ENCODE measurements at regions of chr1 and their contacts with region 1.

Region 1: DNA sequence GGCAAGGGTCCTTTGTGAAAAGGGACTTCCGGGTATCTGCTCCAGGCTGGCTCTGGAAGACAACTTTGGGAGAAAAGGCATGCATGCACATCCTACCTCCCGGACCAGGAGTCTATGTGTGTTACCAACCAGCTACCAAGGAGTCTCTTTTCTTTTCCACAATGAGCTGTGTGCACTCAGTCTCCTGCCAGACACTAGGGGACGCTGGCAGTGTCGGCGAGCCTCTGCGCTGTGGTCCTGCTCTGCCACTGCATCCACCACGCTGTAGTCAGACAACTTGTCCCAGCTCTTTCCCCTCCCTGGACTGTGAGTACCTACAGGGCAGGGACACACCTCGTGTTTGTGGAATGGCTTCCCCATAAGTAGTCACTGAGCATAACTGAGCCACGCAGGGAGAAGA is 5.1 kb upstream of the SSR2 start:
- DNase-seq: peak; percentile 47 to 73
- H3K4me3 ChIP-seq: no peak overlapping the region
- H3K27ac ChIP-seq: no peak overlapping the region
- H3K4me1 ChIP-seq: peaks cover 0 to 3% (median 0%) of the 10 kb centered on the region in 4 experiments; a peak in 3 of 7 replicates
- H3K27me3 ChIP-seq: peaks cover 0 to 4% (median under 1%) of the 10 kb centered on the region in 4 experiments; a peak in 1 of 7 replicates
- CTCF ChIP-seq: peak; percentile 93 to 97 (median 96)
- EP300 ChIP-seq: no peak
- POLR2A ChIP-seq: no peak
- RAD21 ChIP-seq: peak; percentile 61 to 70

Region 2: DNA sequence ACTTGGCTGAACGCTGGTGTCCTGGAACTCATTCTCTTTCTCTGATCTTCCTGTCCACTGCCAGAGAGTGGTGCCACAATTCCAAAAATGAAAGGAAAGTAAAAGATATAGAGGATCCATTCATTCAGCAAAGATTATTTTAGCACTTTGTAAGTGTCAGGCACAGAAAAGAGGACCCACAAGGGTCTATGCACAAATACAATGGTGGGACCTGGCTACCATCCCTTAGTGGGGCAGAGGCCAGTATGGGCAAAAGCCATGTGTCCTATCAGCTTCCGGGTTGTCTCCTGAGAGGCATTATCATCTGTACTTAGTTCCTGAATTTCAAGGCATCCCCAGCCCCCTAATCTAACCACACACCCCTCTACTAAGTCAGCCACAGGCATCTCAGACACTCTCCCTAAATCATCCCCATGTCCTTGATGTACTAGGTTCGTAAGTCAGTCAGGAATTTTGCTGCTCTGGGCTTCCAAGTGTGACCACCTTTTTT is 24.1 kb before region 1 on chr1:
- CTCF ChIA-PET with region 1: interaction called, 77 read pairs
- POLR2A ChIA-PET with region 1: interaction called, 4 read pairs
- DNase-seq: no peak
- H3K4me3 ChIP-seq: no peak overlapping the region
- H3K27ac ChIP-seq: no peak overlapping the region
- H3K4me1 ChIP-seq: peaks cover 0 to 4% (median under 1%) of the 10 kb centered on the region in 4 experiments; a peak in 3 of 7 replicates
- H3K27me3 ChIP-seq: no peaks in the 10 kb centered on the region
- CTCF ChIP-seq: no peak
- EP300 ChIP-seq: no peak
- POLR2A ChIP-seq: no peak
- RAD21 ChIP-seq: no peak

Region 3: GRCh38 chr1:156014826-156015225 is 11.1 kb before region 1 on chr1:
- CTCF ChIA-PET with region 1: interaction called, 12 read pairs
- POLR2A ChIA-PET with region 1: interaction called, 3 read pairs
- DNase-seq: no peak
- H3K4me3 ChIP-seq: no peak overlapping the region
- H3K27ac ChIP-seq: no peak overlapping the region
- H3K4me1 ChIP-seq: peaks cover 0 to 1% (median under 1%) of the 10 kb centered on the region in 4 experiments; a peak in 2 of 7 replicates
- H3K27me3 ChIP-seq: no peaks in the 10 kb centered on the region
- CTCF ChIP-seq: peak; percentile 18 to 45 (median 27)
- EP300 ChIP-seq: no peak
- POLR2A ChIP-seq: no peak
- RAD21 ChIP-seq: peak; percentile 20 to 43

Region 4: DNA sequence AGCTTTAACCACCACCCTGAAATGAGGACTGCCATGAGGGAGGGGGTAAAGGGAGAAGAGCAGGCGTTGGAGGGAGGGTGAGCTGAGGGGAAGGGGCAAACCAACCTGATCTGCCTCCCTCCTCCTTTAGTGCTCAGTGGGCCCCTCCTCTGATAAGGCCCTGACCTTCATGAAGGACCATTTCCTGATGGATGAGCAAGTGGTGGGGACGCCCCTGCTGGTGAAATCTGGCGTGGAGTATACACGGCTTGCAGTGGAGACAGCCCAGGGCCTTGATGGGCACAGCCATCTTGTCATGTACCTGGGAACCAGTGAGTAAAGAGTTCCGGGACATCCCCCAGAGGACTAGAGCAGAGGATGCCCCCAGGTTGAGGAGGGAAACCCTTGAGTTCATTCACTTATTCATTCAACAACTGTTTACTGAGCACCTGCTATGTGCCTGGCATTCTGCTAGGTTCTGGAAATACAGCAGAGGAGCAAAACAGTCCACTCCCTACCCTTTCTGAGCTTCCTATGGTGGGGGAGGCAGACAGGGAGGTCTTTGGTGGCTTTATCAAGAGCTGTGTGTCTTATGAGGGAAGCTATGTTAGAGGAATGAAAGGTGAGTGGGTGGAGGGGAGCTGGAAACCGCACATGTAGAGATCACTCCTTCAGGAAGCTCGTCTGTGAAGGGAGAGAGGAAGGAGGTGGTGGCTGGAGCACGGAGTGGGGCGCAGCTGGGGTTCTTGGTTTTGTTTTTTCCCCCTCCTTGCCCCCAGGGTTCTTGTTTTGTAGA is 147.0 kb after region 1 on chr1:
- CTCF ChIA-PET with region 1: no interaction called
- POLR2A ChIA-PET with region 1: no interaction called
- DNase-seq: no peak
- H3K4me3 ChIP-seq: no peak overlapping the region
- H3K27ac ChIP-seq: peak overlapping the region; percentile 25; the same call in 1 of the 2 replicates
- H3K4me1 ChIP-seq: peaks cover 2 to 11% (median 7%) of the 10 kb centered on the region in 4 experiments
- H3K27me3 ChIP-seq: peaks cover 0 to 2% (median 0%) of the 10 kb centered on the region in 4 experiments; a peak in 1 of 7 replicates
- CTCF ChIP-seq: peak; percentile 16 to 65 (median 59); a peak in 3 of 4 replicates
- EP300 ChIP-seq: no peak
- POLR2A ChIP-seq: no peak
- RAD21 ChIP-seq: peak in 1 of 2 experiments; percentile 13; a peak in 2 of 4 replicates

Region 5: DNA sequence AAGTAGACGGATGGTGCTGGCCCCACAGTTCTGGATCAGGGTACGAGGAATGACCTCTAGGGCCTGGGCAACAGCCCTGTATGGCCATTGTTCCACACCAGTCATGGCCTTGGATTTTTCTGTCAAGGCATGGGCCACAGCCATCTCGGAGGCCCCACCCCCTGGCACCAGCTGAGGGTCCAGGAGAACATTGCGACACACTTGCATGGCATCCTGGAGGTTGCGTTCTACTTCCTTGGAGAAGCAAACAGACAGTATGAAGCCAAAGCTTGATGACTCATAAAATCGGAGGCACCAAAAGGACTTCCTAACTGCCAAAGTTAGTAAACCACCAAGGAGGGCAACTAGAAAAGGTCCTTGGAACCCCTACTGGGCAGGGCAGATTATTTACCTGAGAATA is 285.1 kb after region 1 on chr1:
- CTCF ChIA-PET with region 1: no interaction called
- POLR2A ChIA-PET with region 1: no interaction called
- DNase-seq: no peak
- H3K4me3 ChIP-seq: no peak overlapping the region
- H3K27ac ChIP-seq: no peak overlapping the region
- H3K4me1 ChIP-seq: no peaks in the 10 kb centered on the region
- H3K27me3 ChIP-seq: no peaks in the 10 kb centered on the region
- CTCF ChIP-seq: no peak
- EP300 ChIP-seq: no peak
- POLR2A ChIP-seq: 0 out of 3 replicates have a peak, but pooled peaks of 1 of the 2 experiments have one; percentile 28
- RAD21 ChIP-seq: no peak